CD14-positive monocyte (primary cell): ENCODE measurements at regions of chr17 and their contacts with region 1.

Region 1: DNA sequence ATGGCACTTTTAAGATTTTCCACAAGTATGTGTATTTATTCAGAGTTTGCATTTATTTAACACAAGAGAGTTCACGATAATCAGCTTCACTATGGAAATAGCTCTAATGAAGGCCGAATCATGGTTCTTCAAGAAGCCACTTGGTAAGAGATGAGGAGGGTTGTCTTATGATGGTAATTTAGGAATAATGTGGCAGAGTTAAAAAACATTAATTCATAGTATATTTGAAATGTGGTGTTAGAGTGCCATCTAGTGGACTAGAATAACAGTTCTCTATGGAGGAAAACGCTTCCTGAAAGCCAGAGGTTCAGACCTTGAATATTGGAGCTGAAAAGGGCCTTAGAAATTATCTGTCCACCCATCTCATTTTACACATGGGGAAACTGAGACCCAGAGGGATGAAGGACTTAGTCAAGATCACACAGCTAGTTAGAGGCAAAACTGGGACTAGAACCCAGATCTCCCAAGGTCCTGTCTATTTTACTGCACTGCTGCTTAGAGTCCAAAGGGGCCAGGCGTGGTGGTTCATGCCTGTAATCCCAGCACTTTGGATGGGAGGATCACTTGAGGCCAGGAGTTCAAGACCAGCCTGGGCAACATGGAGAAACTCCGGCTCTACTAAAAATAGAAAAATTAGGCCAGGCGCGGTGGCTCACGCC is 33.8 kb upstream of the KPNB1 start:
- DNase-seq: peak; percentile 31 to 56 (median 40)
- H3K4me3 ChIP-seq: no peak overlapping the region
- H3K4me3 Mint-ChIP-seq: no peak overlapping the region
- H3K27ac ChIP-seq: no peak overlapping the region
- H3K27ac Mint-ChIP-seq: peak overlapping the region in 1 of 7 donors; percentile 13
- H3K4me1 ChIP-seq: no peaks in the 10 kb centered on the region
- H3K4me1 Mint-ChIP-seq: no peaks in the 10 kb centered on the region
- H3K27me3 ChIP-seq: no peaks in the 10 kb centered on the region
- H3K27me3 Mint-ChIP-seq: peaks cover 0 to 1% (median 0%) of the 10 kb centered on the region in 3 donors
- CTCF ChIP-seq: peak; percentile 82

Region 2: GRCh38 chr17:47159315-47159714 is 456.6 kb before region 1 on chr17:
- intact Hi-C with region 1: loop called in 1 of 2 experiments (anchors 10 kb)
- DNase-seq: no peak
- H3K4me3 ChIP-seq: no peak overlapping the region
- H3K4me3 Mint-ChIP-seq: no peak overlapping the region
- H3K27ac ChIP-seq: no peak overlapping the region
- H3K27ac Mint-ChIP-seq: no peak overlapping the region
- H3K4me1 ChIP-seq: no peaks in the 10 kb centered on the region
- H3K4me1 Mint-ChIP-seq: peaks cover 5% of the 10 kb centered on the region
- H3K27me3 ChIP-seq: no peaks in the 10 kb centered on the region
- H3K27me3 Mint-ChIP-seq: peaks cover 0 to 3% (median 0%) of the 10 kb centered on the region in 3 donors
- CTCF ChIP-seq: no peak

Region 3: GRCh38 chr17:47368262-47368661 is 247.6 kb before region 1 on chr17:
- intact Hi-C with region 1: loop called in 1 of 2 experiments (anchors 10 kb)
- DNase-seq: no peak
- H3K4me3 ChIP-seq: no peak overlapping the region
- H3K4me3 Mint-ChIP-seq: no peak overlapping the region
- H3K27ac ChIP-seq: no peak overlapping the region
- H3K27ac Mint-ChIP-seq: no peak overlapping the region
- H3K4me1 ChIP-seq: no peaks in the 10 kb centered on the region
- H3K4me1 Mint-ChIP-seq: peaks cover 3% of the 10 kb centered on the region
- H3K27me3 ChIP-seq: no peaks in the 10 kb centered on the region
- H3K27me3 Mint-ChIP-seq: no peaks in the 10 kb centered on the region
- CTCF ChIP-seq: no peak

Region 4: DNA sequence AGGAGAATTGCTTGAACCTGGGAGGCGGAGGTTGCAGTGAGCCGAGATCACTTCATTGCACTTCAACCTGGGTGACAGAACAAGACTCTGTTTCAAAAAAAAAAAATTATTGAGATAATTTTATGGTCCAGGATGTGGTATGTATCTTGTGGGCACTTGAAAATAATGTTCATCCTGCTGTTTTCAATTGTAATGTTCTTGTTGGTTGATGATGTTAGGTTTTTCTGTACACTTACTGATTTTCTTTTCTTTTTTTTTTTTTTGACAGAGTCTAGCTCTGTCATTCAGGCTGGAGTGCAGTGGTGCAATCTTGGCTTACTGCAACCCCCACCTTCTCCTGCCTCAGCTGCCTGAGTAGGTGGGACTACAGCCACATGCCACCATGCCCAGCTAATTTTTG is 146.8 kb after region 1 on chr17:
- intact Hi-C with region 1: no loop called
- DNase-seq: no peak
- H3K4me3 ChIP-seq: no peak overlapping the region
- H3K4me3 Mint-ChIP-seq: no peak overlapping the region
- H3K27ac ChIP-seq: no peak overlapping the region
- H3K27ac Mint-ChIP-seq: no peak overlapping the region
- H3K4me1 ChIP-seq: no peaks in the 10 kb centered on the region
- H3K4me1 Mint-ChIP-seq: no peaks in the 10 kb centered on the region
- H3K27me3 ChIP-seq: peaks cover 3 to 4% of the 10 kb centered on the region in 2 donors
- H3K27me3 Mint-ChIP-seq: peaks cover 12 to 30% (median 25%) of the 10 kb centered on the region in 3 donors
- CTCF ChIP-seq: no peak